Upper lobe of right lung (tissue), 1 donor: ENCODE measurements at regions of chr1 and their contacts with region 1.

Region 1: GRCh38 chr1:28213315-28213714 is 19.5 kb downstream of the DNAJC8 start:
- DNase-seq: no peak
- ATAC-seq: no peak
- H3K4me3 ChIP-seq: no peak overlapping the region
- H3K27ac ChIP-seq: no peak overlapping the region
- H3K4me1 ChIP-seq: no peaks in the 10 kb centered on the region
- H3K27me3 ChIP-seq: no peaks in the 10 kb centered on the region
- CTCF ChIP-seq: no peak

Region 2: GRCh38 chr1:27952147-27952546 is 261.2 kb before region 1 on chr1:
- intact Hi-C with region 1: no loop called
- DNase-seq: no peak
- ATAC-seq: no peak
- H3K4me3 ChIP-seq: no peak overlapping the region
- H3K27ac ChIP-seq: no peak overlapping the region
- H3K4me1 ChIP-seq: no peaks in the 10 kb centered on the region
- H3K27me3 ChIP-seq: no peaks in the 10 kb centered on the region
- CTCF ChIP-seq: no peak

Region 3: DNA sequence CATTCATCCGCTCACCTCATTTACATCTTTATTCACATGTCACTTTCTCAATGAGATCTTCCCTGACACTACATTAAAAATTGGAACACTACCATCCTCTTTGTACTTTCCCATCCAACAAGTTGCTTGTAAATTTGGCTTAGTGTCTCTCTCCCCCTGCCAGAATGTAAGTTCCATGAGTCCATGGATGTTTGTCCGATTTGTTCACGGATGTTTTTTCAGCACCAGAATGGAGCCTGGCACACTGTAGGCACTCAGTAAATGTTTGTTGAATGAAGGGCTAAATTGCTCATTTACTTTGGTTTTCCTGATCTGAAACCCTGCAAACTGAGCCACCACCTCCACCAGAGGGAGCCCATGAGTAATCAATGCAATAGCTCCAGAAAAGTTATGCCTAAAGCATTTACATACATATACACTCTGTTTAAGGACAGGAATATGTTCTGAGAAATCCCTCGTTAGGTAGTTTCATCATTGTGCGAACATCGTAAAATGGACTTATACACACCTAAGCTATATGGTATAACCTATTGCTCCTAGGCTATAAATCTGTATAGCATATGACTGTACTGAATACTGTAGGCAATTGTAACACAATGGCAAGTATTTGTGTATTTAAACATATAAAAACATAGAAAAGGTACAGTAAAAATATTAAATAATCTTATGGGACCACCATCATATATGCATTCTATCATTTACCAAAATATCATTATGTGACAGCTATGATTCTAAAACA is 122.1 kb before region 1 on chr1:
- intact Hi-C with region 1: loop called (anchors 5 kb)
- DNase-seq: no peak
- ATAC-seq: peak; percentile 53
- H3K4me3 ChIP-seq: no peak overlapping the region
- H3K27ac ChIP-seq: no peak overlapping the region
- H3K4me1 ChIP-seq: peaks cover 23% of the 10 kb centered on the region
- H3K27me3 ChIP-seq: no peaks in the 10 kb centered on the region
- CTCF ChIP-seq: peak; percentile 94

Region 4: DNA sequence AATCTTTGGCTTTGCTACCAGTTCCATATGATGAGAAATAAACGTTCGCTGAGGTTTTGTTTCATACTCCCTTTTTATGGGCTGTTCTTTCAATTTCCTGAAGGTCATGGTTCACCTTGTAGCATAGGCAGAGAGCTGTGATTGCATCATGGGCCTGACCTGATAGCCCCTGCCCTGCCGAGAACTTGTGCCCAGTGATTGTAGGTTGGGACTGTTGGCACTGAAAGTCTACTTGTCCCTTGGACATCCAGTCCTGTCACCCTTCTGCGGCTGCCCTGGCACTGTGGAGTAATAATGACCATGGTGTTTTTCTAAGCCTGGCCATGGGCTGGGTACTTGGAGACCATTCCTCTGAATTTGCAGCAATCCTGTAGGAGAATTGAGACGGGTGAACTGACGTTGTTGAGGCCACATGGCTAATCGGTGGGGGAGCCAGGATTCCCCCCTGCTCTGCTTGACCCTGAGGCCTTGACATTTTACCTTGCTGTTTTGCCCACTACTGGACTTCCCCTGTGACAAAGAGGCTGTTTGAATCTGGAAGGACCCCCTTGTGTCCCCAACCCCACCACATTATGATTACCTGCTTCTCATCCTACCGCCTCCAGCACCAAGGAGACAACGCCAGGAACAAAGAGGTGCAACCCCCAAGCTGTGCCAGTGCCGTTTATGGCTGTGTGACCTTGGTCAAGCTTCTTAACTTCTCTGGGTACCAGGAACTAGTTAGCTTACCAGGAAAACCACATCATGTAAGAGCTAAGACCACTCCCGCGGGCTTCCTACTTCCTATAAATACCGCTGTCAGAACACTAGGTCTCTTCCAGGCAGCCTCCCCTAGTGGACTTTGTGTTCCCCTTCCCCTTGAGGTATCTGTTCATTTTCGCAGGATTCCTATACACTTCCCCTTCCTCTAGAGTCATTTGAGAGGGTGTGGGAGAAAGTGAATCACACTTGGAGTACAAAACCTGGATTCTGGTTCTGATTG is 69.4 kb after region 1 on chr1:
- intact Hi-C with region 1: no loop called
- DNase-seq: no peak
- ATAC-seq: peak; percentile 68
- H3K4me3 ChIP-seq: no peak overlapping the region
- H3K27ac ChIP-seq: no peak overlapping the region
- H3K4me1 ChIP-seq: peaks cover 14% of the 10 kb centered on the region
- H3K27me3 ChIP-seq: no peaks in the 10 kb centered on the region
- CTCF ChIP-seq: no peak